Mucosa of descending colon (tissue), 3 donors: ENCODE measurements at regions of chr1 and their contacts with region 1.

Region 1: GRCh38 chr1:112619520-112620376 is at the start of gene CAPZA1:
- DNase-seq: peak; percentile 93 to 97 (median 94)
- ATAC-seq: peak; percentile 95
- H3K4me3 ChIP-seq: peak within 1 kb of the TSS; percentile 87
- H3K4me1 ChIP-seq: peaks cover 20% of the 10 kb centered on the region
- CTCF ChIP-seq: no peak
- total RNA-seq, gene CAPZA1: 106 to 175 (median 156) TPM

Region 2: GRCh38 chr1:112488141-112488540 is 131.6 kb before region 1 on chr1:
- intact Hi-C with region 1: no loop called
- DNase-seq: no peak
- ATAC-seq: no peak
- H3K4me3 ChIP-seq: no peak overlapping the region
- H3K4me1 ChIP-seq: no peaks in the 10 kb centered on the region
- CTCF ChIP-seq: no peak

Region 3: DNA sequence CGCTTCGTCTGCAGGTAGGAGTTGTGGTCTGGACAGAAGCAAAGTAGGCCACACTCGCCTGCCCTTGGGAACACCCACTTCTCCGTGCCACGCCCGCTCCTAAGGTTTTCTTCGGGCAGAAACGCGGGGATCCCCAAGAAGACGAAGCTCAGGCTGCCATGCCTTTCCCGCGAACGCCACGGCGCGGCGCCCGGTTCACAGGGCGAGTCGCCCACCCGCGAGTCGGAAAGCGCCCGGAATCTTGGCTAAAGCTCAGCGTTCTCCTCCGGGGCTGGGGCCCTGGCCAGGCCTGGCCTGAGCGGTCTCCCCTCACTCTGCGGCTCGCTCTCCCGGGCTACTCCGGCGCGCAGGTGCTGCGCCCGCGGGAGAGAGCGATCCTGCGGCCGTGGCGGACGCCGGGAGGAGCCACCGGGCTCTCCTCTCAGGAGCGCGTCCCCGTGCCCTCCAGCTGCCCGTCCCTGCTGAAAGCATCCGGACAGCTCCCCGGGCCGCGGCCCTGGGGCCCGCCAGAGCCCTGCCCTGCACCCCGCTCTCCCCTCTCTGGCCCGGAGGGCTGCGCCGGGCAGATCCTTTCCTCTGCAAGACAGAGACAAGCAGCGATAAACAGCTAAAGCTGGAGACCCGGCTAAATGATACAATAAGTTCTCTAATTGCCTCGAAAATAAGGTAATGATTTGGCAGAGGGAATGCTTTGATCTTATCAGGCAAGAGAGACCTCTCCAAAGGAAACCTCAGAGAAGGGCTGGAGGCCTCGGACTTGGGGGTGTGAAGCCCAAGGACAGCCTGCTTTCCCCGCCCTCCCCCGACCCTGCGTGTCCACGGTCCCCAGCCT is 117.7 kb before region 1 on chr1:
- intact Hi-C with region 1: loop called in 1 of 2 experiments (anchors 10 kb)
- DNase-seq: peak; percentile 77 to 85 (median 84)
- ATAC-seq: peak; percentile 83
- H3K4me3 ChIP-seq: no peak overlapping the region
- H3K4me1 ChIP-seq: no peaks in the 10 kb centered on the region
- CTCF ChIP-seq: peak; percentile 43